ENCODE measurements at regions of chr1 and their contacts with region 1.

Region 1: DNA sequence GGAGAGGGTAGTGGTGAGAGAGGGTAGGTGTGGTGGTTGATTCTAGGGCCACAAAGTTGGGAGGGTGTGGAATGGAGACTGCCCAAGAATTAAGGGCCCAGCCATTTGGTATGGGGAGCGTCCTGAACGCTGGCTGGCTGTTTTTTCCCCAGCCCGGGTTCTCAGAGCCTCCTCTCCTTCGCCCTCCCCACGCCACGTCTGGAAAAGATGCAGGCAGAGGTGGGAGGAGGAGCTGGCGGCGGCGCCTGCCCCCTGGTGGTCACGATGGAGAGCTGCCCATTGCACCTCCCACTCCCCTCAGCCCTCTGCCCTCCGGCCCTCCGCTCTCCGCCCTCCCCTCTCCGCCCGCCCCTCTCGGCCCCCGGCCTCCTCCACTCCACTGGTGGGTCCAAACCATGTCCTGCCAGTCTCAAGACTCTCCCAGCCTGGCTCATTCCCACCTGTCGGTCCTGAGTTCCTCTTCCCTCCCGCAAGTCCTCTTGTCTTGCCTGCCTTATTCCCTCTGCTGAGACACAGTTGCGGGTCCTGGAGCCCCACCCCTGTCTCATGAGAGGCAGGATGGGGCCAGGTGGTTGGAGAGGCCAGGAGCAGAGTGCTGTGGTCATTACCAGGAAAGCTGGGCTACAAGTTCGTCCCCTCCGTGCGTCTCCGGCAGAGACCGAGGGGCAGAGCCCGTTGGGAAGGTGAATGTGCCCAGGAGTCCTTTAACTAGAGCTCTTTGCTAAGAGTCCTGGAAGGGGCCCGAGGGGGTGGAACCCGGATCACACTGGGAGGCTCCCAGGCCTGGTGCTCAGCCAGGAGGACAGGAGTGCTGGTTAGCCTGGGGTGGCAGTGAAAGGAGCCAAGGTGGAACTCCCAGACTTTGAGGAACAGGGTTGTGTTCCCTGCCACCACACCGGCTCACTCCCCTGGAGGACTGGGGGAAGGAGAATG is 22.6 kb downstream of the ETNK2 start:
- DNase-seq: no peak
- ATAC-seq: peak; percentile 85
- H3K4me3 ChIP-seq: no peak overlapping the region
- H3K27ac ChIP-seq: no peak overlapping the region
- H3K4me1 ChIP-seq: peaks cover 21 to 45% of the 10 kb centered on the region in 2 experiments
- H3K27me3 ChIP-seq: no peaks in the 10 kb centered on the region
- CTCF ChIP-seq: peak; percentile 63 to 86 (median 81)
- POLR2A ChIP-seq: no peak
- RAD21 ChIP-seq: peak; percentile 84

Region 2: GRCh38 chr1:203861379-203862184 is 267.6 kb before region 1 on chr1 and contains the start of gene SNRPE:
- CTCF ChIA-PET with region 1: interaction called, 21 read pairs
- POLR2A ChIA-PET with region 1: interaction called, 9 read pairs
- RAD21 ChIA-PET with region 1: interaction called in 1 of 2 experiments, 3 read pairs
- intact Hi-C with region 1: loop called (anchors 1 kb)
- DNase-seq: peak; percentile 98
- ATAC-seq: peak; percentile 98
- H3K4me3 ChIP-seq: peak within 1 kb of the TSS; percentile 78 to 90
- H3K27ac ChIP-seq: peak within 1 kb of the TSS; percentile 78
- H3K4me1 ChIP-seq: peaks cover 4 to 20% of the 10 kb centered on the region in 2 experiments; a peak in 3 of 4 replicates
- H3K27me3 ChIP-seq: no peaks in the 10 kb centered on the region
- CTCF ChIP-seq: peak; percentile 84 to 97 (median 92)
- POLR2A ChIP-seq: peak; percentile 52
- RAD21 ChIP-seq: peak; percentile 98
- total RNA-seq, gene SNRPE: 288 TPM

Region 3: DNA sequence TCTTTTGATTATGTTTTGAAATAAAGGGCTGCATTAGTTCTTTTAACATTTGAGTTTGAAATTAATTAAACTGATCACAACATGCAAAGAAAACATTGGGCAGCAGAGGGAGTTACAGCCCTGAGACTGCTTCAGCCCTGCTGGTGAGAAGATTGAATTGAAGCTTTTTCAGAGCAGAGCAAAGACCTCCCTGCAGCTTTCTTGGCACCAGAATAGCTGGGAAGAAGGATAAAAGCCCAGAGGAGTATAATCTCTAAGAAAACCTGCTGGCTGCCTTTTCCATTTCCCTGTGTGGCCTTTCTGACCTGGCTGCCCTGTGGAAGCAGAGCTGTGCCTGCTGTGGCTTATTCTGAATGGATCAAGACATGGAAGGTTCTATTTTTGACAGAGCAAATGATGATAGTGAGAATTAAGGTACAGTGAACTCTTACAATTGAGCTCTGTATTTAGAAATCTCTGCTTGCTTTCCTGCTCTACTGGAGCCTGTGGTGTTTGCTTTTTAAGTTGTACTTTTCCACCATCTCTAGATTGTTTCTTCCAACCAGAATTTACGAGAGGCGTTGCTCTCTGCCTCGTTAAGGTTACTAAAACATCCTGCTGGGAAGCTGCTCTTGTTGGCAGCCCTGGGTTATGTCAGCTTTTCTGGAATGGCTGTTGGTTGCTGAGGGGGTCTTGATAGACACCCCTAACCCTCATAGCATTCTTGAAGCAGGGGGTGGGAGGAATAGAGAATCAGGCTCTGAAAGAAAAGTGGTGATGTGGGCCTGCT is 257.9 kb before region 1 on chr1:
- CTCF ChIA-PET with region 1: interaction called, 246 read pairs
- POLR2A ChIA-PET with region 1: interaction called, 14 read pairs
- RAD21 ChIA-PET with region 1: interaction called, 11 to 14 read pairs
- intact Hi-C with region 1: loop called (anchors 1 kb)
- DNase-seq: peak; percentile 62
- ATAC-seq: peak; percentile 86
- H3K4me3 ChIP-seq: no peak overlapping the region
- H3K27ac ChIP-seq: no peak overlapping the region
- H3K4me1 ChIP-seq: no peaks in the 10 kb centered on the region
- H3K27me3 ChIP-seq: no peaks in the 10 kb centered on the region
- CTCF ChIP-seq: peak; percentile 84 to 98 (median 97)
- POLR2A ChIP-seq: no peak
- RAD21 ChIP-seq: peak; percentile 99

Region 4: DNA sequence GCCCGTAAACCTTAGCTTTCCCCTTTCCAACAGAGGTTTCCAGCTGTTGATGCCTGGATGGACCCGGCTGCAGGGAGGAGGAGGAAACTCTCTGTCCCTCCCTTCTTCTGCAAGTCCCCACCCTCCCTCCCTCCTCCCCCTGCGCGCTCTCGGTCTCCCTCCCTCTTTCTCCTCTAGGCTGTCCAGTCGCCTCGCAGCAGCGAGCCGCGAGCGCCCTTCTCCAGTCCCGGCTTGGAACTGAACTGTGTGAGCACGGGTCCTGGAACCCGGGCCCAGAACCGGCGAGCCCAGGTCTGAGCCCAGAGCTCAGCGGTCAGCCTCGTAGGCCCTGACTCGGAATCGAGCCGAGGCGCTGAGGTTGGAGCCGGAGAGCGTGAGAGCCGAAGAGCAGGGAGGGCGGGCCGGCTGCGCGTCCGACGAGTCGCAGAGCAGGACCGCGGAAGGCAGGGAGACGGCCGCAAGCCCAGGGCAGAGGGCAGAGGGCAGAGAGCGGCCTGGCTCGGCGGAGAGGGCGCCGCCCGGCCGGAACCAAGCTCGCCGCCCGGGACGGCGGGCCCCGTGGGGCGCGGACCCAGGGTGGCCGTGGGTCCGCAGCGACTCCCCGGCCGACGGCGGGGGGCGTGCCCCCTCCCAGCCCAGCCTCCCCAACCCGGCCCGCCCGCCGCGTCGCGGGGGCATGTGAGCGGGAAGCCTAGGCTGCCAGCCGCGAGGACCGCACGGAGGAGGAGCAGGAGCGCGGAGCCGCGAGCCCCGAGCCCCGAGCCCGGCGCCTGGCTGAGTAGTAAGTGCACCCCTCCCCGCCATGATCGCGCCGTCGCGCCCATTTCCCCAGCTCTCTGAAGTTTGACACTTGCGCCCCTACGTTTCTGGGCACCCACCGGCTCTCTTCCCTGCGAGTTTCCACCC is 56.0 kb before region 1 on chr1 and contains the start of gene SOX13:
- CTCF ChIA-PET with region 1: interaction called, 4 read pairs
- POLR2A ChIA-PET with region 1: interaction called, 4 read pairs
- RAD21 ChIA-PET with region 1: interaction called in 1 of 2 experiments, 4 read pairs
- intact Hi-C with region 1: loop called (anchors 2 kb)
- DNase-seq: peak; percentile 79
- ATAC-seq: peak; percentile 86
- H3K4me3 ChIP-seq: peak within 1 kb of the TSS; percentile 74 to 77
- H3K27ac ChIP-seq: peak within 1 kb of the TSS; percentile 91
- H3K4me1 ChIP-seq: peaks cover 11 to 32% of the 10 kb centered on the region in 2 experiments
- H3K27me3 ChIP-seq: no peaks in the 10 kb centered on the region
- CTCF ChIP-seq: peak in 2 of 3 experiments; percentile 16 to 18; a peak in 1 of 6 replicates
- POLR2A ChIP-seq: peak; percentile 95
- RAD21 ChIP-seq: no peak
- total RNA-seq, gene SOX13: 35.6 TPM

Region 5: GRCh38 chr1:204080163-204080903 is 48.9 kb before region 1 on chr1:
- CTCF ChIA-PET with region 1: interaction called, 15 read pairs
- POLR2A ChIA-PET with region 1: no interaction called
- RAD21 ChIA-PET with region 1: interaction called in 1 of 2 experiments, 3 read pairs
- intact Hi-C with region 1: no loop called
- DNase-seq: peak; percentile 90
- ATAC-seq: peak; percentile 97
- H3K4me3 ChIP-seq: peak overlapping the region; percentile 18 to 52
- H3K27ac ChIP-seq: peak overlapping the region; percentile 85
- H3K4me1 ChIP-seq: peaks cover 52 to 78% of the 10 kb centered on the region in 2 experiments
- H3K27me3 ChIP-seq: no peaks in the 10 kb centered on the region
- CTCF ChIP-seq: peak in 2 of 3 experiments; percentile 6 to 15; a peak in 1 of 6 replicates
- POLR2A ChIP-seq: no peak
- RAD21 ChIP-seq: no peak

Region 6: GRCh38 chr1:204113896-204114295 is 15.3 kb before region 1 on chr1:
- CTCF ChIA-PET with region 1: interaction called, 16 read pairs
- POLR2A ChIA-PET with region 1: no interaction called
- RAD21 ChIA-PET with region 1: no interaction called
- intact Hi-C with region 1: no loop called
- DNase-seq: no peak
- ATAC-seq: no peak
- H3K4me3 ChIP-seq: no peak overlapping the region
- H3K27ac ChIP-seq: no peak overlapping the region
- H3K4me1 ChIP-seq: peaks cover 14 to 24% of the 10 kb centered on the region in 2 experiments; a peak in 3 of 4 replicates
- H3K27me3 ChIP-seq: no peaks in the 10 kb centered on the region
- CTCF ChIP-seq: no peak
- POLR2A ChIP-seq: no peak
- RAD21 ChIP-seq: no peak